Panc1 (cell line): ENCODE measurements at regions of chr3 and their contacts with region 1.

Region 1: DNA sequence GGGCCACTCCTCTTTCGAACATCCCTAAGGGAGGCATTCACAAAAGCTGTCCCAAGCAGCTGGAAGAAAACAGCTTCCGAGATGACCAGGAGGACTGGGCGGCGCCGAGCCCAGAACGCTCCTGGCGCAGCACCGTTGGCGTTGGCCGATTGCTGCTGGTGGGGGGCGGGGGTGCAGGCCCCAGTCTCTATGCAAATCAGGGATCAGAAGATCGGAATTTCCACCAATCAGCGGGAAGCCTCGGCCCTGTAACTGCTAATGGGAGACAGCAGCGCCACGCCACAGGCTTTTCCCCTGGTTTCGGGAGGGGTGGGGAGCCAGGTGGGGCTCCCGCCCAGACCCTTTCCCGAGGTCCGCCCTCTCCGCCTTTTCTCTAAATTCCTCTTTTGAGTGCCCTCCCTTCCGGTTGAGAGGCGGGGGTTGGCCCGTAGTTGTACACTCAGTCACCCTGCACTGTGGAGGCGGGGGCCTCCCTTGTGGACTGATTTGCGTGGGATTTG is 27.0 kb downstream of the HMCES start:
- DNase-seq: no peak
- ATAC-seq: no peak
- H3K4me3 ChIP-seq: no peak overlapping the region
- H3K27ac ChIP-seq: no peak overlapping the region
- H3K4me1 ChIP-seq: no peaks in the 10 kb centered on the region
- H3K27me3 ChIP-seq: no peaks in the 10 kb centered on the region
- CTCF ChIP-seq: no peak

Region 2: GRCh38 chr3:128932516-128933212 is 373.0 kb before region 1 on chr3:
- CTCF ChIA-PET with region 1: interaction called, 13 read pairs
- POLR2A ChIA-PET with region 1: no interaction called
- in situ Hi-C with region 1: no loop called
- intact Hi-C with region 1: no loop called
- DNase-seq: no peak
- ATAC-seq: no peak
- H3K4me3 ChIP-seq: no peak overlapping the region
- H3K27ac ChIP-seq: no peak overlapping the region
- H3K4me1 ChIP-seq: no peaks in the 10 kb centered on the region
- H3K27me3 ChIP-seq: 0 out of 2 replicates have a peak, but pooled peaks cover 2% of the 10 kb centered on the region
- CTCF ChIP-seq: no peak

Region 3: DNA sequence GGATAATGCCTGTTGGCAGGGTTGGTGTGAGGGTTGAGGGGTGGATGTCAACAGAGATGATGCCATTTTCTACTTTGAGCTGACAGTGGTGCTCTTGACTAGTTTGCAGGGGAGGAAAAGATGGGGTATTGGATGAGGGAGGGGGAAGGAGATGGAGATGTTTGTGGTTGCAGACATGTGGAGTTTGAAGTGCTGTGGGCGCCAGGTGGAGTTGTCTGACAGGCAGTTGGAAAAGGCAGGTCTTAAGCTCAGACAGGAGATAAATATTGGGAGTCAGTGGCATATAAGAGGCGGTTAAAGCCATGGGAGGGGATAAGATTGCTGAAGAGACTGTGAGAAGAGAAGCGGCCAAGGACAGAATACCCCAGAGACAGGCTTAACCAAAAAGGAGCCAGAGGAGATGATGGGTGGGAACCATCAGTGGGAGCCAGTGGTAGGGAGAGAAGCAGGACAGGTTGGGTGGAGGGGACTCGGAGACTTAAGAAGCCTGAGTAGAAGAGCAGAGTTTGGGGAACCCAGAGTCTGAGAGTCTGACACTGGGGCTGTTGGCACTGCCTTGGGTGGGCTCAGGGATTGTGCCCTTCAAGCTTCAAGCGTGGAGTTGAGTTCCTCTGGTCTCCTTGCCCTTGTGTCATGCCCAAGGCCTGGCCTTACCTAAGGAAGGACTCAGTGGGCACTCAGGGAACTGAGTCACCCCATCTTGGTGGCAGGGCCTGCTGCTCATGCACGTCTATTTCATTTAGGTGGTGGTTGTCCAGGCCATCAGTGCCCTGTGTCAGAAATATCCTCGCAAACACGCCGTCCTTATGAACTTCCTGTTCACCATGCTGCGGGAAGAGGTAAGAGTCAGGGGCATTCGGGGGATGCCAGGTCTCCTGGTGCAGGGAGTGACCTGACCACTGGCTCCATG is 42.2 kb before region 1 on chr3:
- CTCF ChIA-PET with region 1: no interaction called
- POLR2A ChIA-PET with region 1: interaction called, 15 read pairs
- in situ Hi-C with region 1: no loop called
- intact Hi-C with region 1: no loop called
- DNase-seq: no peak
- ATAC-seq: no peak
- H3K4me3 ChIP-seq: no peak overlapping the region
- H3K27ac ChIP-seq: no peak overlapping the region
- H3K4me1 ChIP-seq: no peaks in the 10 kb centered on the region
- H3K27me3 ChIP-seq: no peaks in the 10 kb centered on the region
- CTCF ChIP-seq: no peak